Right ventricle myocardium inferior (tissue), 1 donor: ENCODE measurements at regions of chr9 and their contacts with region 1.

Region 1: GRCh38 chr9:127686461-127687393 is 20.1 kb upstream of the CFAP157 start:
- DNase-seq: no peak
- ATAC-seq: no peak

Region 2: DNA sequence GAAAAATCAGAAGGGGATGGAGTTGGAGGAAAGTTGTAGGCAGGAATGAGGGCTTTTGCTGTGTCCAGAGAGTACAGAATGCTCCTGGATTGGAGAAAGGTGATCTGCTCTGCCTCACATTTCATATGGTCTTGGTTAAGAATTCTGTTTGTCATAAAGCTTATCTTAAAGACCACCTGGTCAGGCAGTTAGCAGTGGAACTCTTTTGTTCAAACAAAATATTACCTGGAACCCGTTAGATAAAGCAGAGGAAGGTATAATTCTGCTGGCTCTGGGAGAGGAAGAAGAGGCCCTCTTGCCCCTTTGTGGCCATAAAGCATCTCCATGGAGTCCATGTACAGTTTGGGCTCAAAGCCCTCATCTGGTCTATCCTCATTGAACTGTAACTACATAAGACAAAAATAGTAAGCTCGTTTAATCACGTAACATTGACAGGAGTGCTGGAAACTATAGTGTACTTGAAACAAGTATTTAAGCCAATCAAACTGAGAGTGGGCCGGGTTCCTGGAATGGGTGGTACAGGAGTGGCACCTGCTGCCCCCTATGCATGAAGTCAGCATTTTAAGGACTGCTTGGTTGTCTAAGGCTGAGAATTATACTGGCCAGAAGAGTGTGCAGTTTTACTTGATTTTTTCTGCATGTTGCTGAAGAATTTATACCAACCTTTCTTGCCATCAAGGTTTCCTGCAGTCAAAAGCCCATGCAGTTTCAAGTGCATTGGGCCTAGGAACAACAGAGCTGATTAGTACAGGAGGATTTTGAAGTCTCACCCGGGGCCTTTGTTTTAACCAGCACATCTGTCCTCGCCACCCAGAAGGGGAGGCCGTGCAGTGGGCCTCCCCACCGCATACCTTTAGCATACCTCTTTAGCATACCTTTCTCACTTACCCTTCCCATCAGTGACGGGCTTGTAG is 34.8 kb before region 1 on chr9:
- intact Hi-C with region 1: loop called (anchors 1 kb)
- DNase-seq: no peak
- ATAC-seq: peak; percentile 30

Region 3: GRCh38 chr9:127754099-127755050 is 67.6 kb after region 1 on chr9:
- intact Hi-C with region 1: no loop called
- DNase-seq: no peak
- ATAC-seq: peak; percentile 26